Activated CD4-positive, alpha-beta T cell treated with anti-CD3 and anti-CD28 coated beads, Interleukin-2, amount 10 ng/mL, durations not matched to agents 24 days and 14 days (primary cell): ENCODE measurements at regions of chrX and their contacts with region 1.

Region 1: DNA sequence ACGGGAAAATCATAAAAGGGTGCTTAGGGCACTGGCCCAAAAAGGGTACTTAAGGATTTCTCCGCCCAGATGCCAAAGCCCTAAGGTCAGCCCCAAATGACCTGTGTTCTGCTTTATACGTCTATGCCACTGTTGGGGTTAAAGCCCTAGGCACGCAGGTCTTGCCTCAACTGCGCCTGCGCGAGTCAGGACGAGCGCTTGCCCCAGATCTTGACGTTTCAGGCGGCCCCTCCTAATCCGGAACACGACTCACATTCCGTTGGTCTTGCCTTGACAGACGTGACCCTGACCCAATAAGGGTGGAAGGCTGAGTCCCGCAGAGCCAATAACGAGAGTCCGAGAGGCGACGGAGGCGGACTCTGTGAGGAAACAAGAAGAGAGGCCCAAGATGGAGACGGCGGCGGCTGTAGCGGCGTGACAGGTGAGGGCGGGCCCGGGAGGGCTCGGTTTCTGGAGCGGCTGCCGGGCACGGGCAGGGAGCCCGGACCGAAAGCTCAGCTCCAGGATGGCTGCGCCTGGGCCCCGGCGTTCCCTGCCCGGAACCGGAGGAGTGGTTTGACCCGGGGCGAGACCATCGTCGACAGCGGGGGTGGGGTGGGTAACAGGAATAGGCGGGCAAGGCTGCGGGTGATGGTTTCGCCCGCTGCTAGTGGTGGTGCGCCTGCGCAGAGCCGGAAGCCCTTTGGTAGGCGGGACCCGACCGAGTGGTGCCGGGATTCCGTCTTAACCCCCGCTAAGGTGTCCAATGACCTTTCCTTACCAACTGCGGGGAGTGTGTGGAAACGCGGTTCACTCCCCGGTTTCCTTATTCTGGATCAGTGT is at the start of gene ARAF:
- DNase-seq: peak; percentile 98
- H3K4me3 Mint-ChIP-seq: peak within 1 kb of the TSS; percentile 95
- H3K27ac Mint-ChIP-seq: peak within 1 kb of the TSS; percentile 97
- H3K4me1 Mint-ChIP-seq: peaks cover 28% of the 10 kb centered on the region
- H3K27me3 Mint-ChIP-seq: no peaks in the 10 kb centered on the region
- total RNA-seq, gene ARAF: 77.3 and 78.9 TPM in 2 replicates

Region 2: DNA sequence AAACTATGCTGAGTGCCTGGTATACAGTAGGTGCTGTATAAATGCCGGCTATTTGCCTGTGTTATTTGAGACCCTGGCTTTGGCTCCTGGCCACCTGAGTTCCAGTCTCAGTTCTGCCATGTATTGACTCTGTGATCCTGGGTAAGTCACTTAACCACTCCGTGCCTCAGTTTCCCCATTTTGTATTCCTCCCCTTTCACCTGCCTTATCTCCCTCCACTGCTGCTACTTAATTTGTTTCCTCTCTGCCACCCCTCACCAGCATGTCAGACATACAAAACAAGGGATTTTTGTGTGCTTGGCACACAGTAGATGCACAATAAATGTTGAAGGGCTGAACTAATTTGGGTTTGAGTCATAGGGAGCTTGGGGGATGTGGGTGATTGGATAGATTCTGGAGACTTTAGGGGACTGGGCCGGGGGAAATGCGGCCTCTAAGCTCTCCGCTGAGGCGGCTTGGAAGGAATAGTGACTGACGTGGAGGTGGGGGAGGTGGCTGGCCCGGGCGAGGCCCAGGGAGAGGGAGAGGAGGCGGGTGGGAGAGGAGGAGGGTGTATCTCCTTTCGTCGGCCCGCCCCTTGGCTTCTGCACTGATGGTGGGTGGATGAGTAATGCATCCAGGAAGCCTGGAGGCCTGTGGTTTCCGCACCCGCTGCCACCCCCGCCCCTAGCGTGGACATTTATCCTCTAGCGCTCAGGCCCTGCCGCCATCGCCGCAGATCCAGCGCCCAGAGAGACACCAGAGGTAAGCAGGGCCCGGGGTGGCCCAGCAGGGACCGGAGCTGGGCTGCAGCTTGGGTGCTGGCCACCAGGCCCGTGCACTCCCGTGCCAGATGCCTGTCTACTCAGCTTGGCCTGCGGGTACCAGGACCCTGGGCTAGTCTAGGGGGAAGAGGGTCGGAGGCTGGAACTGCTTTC is 20.9 kb after region 1 on chrX and contains the start of gene TIMP1:
- intact Hi-C with region 1: loop called (anchors 2 kb)
- DNase-seq: peak; percentile 93
- H3K4me3 Mint-ChIP-seq: peak within 1 kb of the TSS; percentile 80
- H3K27ac Mint-ChIP-seq: peak within 1 kb of the TSS; percentile 81
- H3K4me1 Mint-ChIP-seq: peaks cover 40% of the 10 kb centered on the region
- H3K27me3 Mint-ChIP-seq: peaks cover under 1% of the 10 kb centered on the region
- total RNA-seq, gene TIMP1: 65.2 and 65.6 TPM in 2 replicates

Region 3: GRCh38 chrX:47658684-47659515 is 97.9 kb after region 1 on chrX and contains the start of gene UXT:
- intact Hi-C with region 1: loop called (anchors 2 kb)
- DNase-seq: peak; percentile 97
- H3K4me3 Mint-ChIP-seq: peak within 1 kb of the TSS; percentile 88
- H3K27ac Mint-ChIP-seq: peak within 1 kb of the TSS; percentile 99
- H3K4me1 Mint-ChIP-seq: peaks cover 29% of the 10 kb centered on the region
- H3K27me3 Mint-ChIP-seq: no peaks in the 10 kb centered on the region
- total RNA-seq, gene UXT: 174 and 194 TPM in 2 replicates

Region 4: DNA sequence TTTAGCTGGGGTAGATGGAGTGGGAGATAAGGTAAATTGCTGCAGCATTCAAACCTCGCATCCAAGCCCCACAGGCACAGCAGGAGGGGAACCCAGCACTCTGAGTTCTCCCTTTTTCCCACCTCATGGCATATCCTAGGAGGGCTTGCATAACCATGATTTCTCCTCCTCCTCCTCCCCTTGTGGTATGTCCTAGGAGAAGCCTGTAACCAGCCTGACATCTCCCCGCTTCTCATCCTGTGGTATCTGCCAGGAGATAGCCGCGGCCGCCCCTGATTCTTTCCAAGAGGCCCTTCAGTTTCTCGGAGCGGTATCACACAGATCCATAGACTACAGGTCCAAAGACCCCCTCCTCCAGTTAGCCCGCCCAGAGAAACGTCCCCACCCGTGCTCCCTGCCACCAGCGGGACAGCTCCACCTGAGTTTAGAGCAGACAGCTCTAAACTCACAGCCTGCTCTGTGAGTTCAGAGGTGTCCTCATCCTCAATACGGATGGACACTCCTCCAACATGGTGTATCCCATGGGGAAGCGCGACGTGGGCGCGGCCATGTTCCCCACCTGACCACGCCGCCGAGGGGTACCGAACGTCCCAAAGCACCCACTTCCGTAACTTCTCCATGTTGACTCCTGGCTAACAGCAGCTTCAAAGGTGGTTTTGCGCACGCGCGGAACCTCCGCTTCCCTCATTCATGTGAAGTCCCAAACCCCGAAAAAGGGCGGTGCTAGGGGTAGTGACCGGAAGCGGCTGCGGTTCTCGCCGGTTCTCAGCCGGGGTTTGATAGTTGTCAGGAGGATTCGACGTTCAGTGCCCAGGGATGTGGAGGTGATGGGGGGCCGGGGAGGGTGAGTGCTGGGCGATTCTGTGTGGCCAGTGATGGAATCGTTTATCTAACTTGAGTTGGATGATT is 275.4 kb after region 1 on chrX and contains the start of gene ZNF81:
- intact Hi-C with region 1: loop called (anchors 5 kb)
- DNase-seq: peak; percentile 97
- H3K4me3 Mint-ChIP-seq: peak within 1 kb of the TSS; percentile 99
- H3K27ac Mint-ChIP-seq: peak within 1 kb of the TSS; percentile 99
- H3K4me1 Mint-ChIP-seq: peaks cover 15% of the 10 kb centered on the region
- H3K27me3 Mint-ChIP-seq: no peaks in the 10 kb centered on the region
- total RNA-seq, gene ZNF81: 4.0 and 9.0 TPM in 2 replicates